Activated CD4-positive, alpha-beta T cell treated with anti-CD3 and anti-CD28 coated beads, Interleukin-2, amount 10 ng/mL, durations not matched to agents 24 days and 14 days (primary cell): ENCODE measurements at regions of chr16 and their contacts with region 1.

Region 1: DNA sequence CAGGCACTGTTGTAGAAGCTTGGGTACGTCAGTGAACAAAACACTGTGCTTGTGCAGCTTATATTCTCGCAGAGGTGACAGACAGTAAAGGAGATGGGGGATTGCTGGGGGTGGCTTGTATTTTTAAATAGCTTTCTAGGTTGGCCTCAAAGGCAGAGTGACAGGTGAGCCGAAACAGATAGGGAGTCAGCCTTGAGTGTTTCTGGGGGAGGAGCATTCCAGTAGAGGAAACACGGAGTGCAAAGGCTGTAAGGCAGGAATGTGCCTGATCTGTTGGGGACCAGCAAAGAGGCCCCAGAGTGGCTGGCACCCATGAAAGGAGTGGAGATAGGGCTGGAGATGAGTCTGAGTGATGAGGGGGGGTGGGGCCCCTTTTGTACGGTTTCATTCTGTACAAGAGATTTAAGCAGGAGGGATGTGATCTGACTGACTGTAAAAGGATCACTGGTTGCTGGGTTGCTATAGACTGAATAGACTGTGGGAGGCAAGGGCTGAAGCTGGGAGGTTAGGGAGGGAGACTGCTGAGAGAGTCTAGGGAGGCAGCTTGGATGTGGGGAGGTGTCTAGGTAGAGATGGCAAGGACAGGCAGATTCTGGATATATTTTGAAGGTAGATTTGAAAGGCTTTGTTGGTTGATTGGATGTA is 15.2 kb downstream of the NUP93 start:
- DNase-seq: no peak
- H3K4me3 Mint-ChIP-seq: no peak overlapping the region
- H3K27ac Mint-ChIP-seq: no peak overlapping the region
- H3K4me1 Mint-ChIP-seq: peaks cover 27% of the 10 kb centered on the region
- H3K27me3 Mint-ChIP-seq: no peaks in the 10 kb centered on the region

Region 2: DNA sequence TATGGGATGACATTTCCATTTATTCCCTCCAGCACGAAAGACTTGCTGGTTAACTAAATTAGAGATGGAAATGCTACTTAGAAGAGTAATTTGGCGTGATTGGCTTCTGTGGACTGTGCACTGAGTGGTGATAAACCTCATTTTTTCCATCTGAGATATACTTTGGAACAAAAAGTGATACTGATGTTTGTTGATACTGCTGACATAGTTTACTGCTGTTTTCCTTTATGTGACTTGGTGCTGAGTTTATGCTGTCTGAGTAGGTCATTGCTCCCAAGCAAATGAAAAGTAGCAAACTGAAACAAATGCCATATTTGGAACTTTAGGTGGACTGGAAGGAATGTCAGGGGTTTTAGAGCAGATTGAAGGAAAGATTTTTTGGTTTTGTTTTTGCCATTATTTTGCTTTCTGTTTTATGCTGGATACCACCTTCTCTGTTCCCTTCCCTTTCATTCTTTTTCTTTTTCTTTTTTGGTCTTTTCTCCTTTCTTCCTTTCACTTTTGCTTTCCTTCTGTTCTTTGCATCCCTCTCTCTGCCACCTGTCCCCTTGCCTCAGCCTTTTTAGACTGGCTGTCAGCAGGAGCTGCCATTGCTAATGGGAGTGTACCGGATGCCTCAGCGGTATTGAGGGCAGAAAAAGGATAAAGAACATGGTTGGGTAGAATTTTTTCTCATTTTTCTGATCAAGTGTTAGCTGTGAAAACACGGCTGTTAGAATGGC is 26.6 kb after region 1 on chr16:
- intact Hi-C with region 1: loop called (anchors 2 kb)
- DNase-seq: no peak
- H3K4me3 Mint-ChIP-seq: peak overlapping the region; percentile 59
- H3K27ac Mint-ChIP-seq: peak overlapping the region; percentile 49
- H3K4me1 Mint-ChIP-seq: peaks cover 21% of the 10 kb centered on the region
- H3K27me3 Mint-ChIP-seq: no peaks in the 10 kb centered on the region

Region 3: DNA sequence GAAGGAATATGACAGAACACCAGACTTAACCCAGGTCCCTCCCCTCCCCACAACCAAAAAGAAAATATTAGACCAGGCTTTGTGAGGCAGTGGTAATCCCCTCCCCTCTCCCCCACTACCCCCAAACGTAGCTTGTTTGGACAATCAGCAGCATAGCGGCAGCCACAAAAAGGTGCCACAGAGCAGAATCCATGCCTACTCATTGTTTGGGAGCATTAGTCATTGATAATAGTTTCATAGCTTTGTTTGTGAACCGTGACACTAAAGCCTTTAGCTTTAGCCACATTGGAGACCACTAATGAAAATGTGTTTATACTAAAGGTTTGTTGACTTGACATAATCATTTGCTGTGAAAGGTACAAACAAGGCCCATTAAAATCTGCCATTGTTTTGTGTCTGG is 49.9 kb after region 1 on chr16:
- intact Hi-C with region 1: loop called (anchors 5 kb)
- DNase-seq: no peak
- H3K4me3 Mint-ChIP-seq: no peak overlapping the region
- H3K27ac Mint-ChIP-seq: no peak overlapping the region
- H3K4me1 Mint-ChIP-seq: peaks cover 3% of the 10 kb centered on the region
- H3K27me3 Mint-ChIP-seq: no peaks in the 10 kb centered on the region

Region 4: DNA sequence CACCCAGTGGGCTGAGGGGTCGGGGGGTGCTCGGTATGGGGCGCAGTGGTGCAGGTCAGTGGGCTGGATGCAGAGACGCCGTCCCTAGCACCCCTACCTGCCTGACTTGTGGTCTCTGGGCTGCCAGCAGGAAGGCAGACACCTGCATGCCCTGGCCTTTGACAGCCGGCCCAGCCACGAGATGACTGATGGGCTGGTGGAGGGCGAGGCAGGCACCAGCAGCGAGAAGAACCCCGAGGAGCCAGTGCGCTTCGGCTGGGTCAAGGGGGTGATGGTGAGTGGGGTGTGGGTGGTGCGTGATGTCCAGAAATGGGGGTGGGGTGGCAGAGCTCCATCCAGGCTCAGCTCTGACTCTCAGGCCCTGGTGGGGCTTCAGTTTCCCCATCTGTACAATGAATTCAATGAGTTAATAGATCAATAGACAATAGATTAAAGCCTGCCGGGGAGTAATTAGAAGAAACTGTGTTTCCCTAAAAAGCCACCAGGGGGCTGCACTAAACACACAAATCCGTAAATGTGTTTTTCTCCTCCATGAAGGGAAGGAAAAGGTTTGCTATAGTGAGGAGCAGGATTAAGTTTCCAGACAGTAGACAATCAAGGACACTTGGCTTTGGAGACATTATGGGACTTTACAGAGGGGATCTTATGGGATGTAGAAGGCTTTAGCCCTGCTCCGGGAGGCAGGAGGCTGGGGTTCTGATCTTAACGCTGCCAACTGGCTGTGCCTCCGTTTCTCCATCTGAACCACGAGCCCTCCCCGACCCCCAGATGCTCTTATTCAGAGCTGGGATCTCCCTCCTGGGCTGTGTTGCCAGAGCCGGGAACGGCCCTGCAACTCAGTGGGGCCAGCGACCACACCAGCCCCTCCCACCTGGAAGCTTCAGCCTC is 122.1 kb after region 1 on chr16:
- intact Hi-C with region 1: no loop called
- DNase-seq: peak; percentile 84
- H3K4me3 Mint-ChIP-seq: no peak overlapping the region
- H3K27ac Mint-ChIP-seq: no peak overlapping the region
- H3K4me1 Mint-ChIP-seq: peaks cover 19% of the 10 kb centered on the region
- H3K27me3 Mint-ChIP-seq: no peaks in the 10 kb centered on the region